BJ (cell line): ENCODE measurements at regions of chr2 and their contacts with region 1.

Region 1: GRCh38 chr2:196068271-196069209 is at the start of gene DNAH7:
- DNase-seq: peak; percentile 24
- H3K4me3 ChIP-seq: peak within 1 kb of the TSS; percentile 86
- H3K27me3 ChIP-seq: no peaks in the 10 kb centered on the region
- CTCF ChIP-seq: peak; percentile 91
- polyA plus RNA-seq, gene DNAH7: 0.15 and 0.50 TPM in 2 replicates

Region 2: DNA sequence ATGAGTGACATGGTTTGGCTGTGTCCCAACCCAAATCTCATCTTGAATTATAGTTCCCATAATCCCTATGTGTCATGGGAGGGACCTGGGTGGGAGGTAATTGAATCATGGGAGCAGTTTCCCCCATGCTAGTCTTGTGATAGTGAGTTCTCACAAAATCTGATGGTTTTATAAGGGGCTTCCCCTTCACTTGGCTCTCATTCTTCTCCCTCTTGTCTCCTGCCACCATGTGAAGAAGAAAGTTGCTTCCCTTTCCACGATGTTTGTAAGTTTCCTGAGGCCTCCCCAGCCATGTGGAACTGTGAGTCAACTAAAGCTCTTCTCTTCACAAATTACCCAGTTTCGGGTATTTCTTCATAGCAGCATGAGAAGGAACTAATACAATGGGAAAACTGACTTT is 13.9 kb before region 1 on chr2:
- CTCF ChIA-PET with region 1: interaction called, 15 read pairs
- POLR2A ChIA-PET with region 1: no interaction called
- DNase-seq: no peak
- H3K4me3 ChIP-seq: no peak overlapping the region
- H3K27me3 ChIP-seq: peaks cover 3% of the 10 kb centered on the region; the same call in 1 of the 2 replicates
- CTCF ChIP-seq: no peak